ENCODE measurements at regions of chr16 and their contacts with region 1.

Region 1: GRCh38 chr16:57906382-57907316 is 64.3 kb downstream of the CNGB1 start:
- DNase-seq: no peak
- ATAC-seq: peak; percentile 76
- H3K4me3 ChIP-seq: no peak overlapping the region
- H3K27ac ChIP-seq: no peak overlapping the region
- H3K4me1 ChIP-seq: no peaks in the 10 kb centered on the region
- H3K27me3 ChIP-seq: peaks cover 7% of the 10 kb centered on the region
- CTCF ChIP-seq: peak; percentile 54

Region 2: DNA sequence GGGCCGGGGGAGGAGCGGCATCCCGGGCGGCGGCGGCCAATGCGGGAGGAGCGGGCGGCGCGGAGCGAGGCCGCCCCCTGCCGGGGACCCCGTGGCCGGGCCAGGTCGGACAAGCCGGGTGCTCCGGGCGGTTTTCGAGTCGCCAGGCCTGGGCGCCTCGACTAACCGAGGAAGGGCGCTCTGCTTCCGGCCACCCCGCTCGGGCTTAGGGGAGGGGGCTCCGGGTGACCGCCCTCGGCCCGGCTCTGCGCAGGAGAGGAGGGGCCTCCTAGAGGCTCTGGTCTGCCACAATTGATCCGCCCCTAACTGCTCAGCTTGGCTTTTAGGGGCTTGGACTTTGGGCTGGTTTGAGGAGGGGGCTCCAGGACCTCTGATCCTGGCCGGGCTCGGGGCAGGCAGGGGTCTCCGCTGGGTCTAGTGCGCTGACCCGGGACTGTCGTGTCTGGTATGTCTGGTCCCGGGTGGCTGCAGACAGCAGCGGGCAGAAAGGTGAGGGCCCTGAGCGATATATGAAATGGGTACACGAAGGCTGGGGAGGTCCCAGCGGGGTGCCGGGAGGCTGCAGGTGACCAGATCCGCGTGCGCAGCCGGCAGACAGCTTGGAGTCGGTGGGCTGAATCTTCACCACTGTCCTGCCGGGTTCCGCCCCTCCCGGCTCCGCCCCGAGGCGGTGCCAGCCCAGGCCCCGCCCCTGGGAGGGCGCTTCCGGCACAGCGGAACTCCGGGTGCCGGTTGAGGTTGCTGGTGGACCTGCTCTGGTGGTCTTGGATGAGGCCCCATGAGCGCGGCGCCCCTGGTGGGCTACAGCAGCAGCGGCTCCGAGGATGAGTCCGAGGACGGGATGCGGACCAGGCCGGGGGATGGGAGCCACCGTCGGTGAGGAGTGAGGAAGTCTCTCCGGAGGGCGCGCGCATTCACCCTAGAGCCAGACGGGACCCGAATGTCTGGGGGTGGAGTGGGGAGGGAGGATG is 94.3 kb after region 1 on chr16 and contains the start of gene USB1:
- intact Hi-C with region 1: loop called (anchors 5 kb)
- DNase-seq: peak; percentile 94
- ATAC-seq: peak; percentile 92
- H3K4me3 ChIP-seq: peak within 1 kb of the TSS; percentile 66
- H3K27ac ChIP-seq: peak within 1 kb of the TSS; percentile 85
- H3K4me1 ChIP-seq: peaks cover 28% of the 10 kb centered on the region
- H3K27me3 ChIP-seq: no peaks in the 10 kb centered on the region
- CTCF ChIP-seq: peak; percentile 67
- total RNA-seq, gene USB1: 37.4 TPM

Measured in upper lobe of right lung (tissue), 1 donor.